ENCODE measurements at regions of chr16 and their contacts with region 1.

Region 1: DNA sequence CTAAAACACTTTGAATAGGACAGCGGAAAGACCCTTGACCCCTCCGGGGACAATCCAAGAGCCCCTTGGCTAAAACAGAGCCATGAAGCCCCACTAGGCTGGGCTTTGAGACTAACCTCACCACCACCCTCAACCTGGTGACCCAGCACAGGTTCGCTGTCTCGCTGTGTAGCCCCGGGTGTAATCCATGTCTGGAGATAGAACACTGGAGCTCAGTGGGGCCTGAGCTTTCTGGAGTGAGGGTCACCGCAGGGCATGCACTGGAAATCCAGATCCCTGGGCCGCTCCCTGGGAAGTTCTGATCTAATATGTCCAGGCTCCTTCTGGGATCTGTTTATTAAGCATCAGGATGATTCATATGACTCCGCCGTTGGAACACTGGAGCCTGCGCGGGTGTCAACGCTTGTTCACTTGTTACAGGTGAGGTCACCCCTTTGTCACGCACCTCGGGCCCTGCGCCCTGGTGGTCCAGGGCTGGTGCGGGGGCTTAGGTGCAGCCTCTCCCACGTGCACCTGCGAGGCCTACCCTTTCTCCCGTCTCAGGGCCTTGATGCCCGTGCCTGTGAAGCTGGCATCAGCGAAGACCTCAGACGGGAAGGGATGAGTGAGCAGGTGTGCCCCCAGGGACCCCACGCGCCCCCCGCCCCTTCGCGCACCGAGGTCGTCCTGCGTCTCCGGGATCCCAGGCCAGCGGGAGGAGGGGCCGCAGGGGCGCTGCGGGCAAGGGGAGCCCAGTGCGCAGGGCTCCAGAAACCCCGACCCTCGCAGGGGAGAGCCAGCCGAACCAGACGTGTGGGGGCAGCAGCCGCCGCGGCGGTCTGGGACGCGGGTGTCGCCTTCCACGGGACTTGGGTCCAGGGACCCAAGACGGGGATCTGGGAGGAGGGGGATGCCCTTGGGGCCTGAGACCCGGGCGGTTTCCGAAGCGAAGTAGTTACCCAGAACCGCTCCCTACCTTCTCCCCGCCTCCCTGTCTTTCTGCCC is 224.1 kb upstream of the FOXF1 start:
- DNase-seq: no peak
- H3K4me3 Mint-ChIP-seq: no peak overlapping the region
- H3K27ac Mint-ChIP-seq: no peak overlapping the region
- H3K4me1 Mint-ChIP-seq: no peaks in the 10 kb centered on the region
- H3K27me3 Mint-ChIP-seq: peaks cover 47% of the 10 kb centered on the region

Region 2: GRCh38 chr16:86107215-86107825 is 178.9 kb before region 1 on chr16:
- CTCF ChIA-PET with region 1: no interaction called
- POLR2A ChIA-PET with region 1: no interaction called
- intact Hi-C with region 1: no loop called
- DNase-seq: no peak
- H3K4me3 Mint-ChIP-seq: no peak overlapping the region
- H3K27ac Mint-ChIP-seq: no peak overlapping the region
- H3K4me1 Mint-ChIP-seq: no peaks in the 10 kb centered on the region
- H3K27me3 Mint-ChIP-seq: peaks cover 2% of the 10 kb centered on the region

Region 3: DNA sequence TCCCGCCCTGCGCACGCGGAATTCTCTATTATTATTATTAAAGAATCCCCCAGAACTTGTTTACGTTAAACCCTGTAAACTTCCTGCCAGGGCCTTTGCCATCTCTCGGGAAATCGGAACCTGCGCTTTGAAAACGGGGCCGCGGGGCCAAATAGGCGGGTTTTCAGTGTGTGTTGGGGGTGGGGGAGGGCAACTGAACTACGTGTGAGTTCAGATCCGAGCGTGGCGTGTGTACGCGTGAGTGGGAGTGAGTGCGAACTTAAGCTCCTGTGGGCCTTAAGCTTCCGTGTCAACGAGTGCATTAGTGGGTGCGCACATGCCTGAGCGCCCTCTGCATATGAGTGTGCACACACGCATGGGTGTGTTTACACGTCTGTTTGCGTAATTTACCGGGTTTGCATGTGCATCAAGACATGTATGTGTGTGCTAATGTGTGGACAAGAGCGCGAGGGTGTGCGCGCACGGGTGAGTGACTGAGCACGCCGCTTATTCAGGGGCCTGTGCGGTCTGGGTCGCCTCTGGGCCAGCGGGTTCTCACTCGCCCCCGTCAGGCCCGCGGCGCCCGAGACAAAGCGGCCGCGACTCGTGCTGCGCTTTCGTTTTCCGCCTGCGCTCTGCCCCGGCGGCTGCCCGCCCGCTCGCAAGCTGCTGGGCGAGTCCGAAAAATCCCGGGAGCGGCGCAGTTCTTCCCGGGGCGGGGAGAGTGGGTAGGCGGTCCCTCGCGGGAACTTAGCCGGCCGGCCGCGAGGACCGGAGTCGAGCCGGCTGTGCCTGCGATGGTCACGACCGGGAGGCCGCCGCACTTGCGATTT is 222.9 kb after region 1 on chr16:
- CTCF ChIA-PET with region 1: no interaction called
- POLR2A ChIA-PET with region 1: no interaction called
- intact Hi-C with region 1: loop called (anchors 10 kb)
- DNase-seq: no peak
- H3K4me3 Mint-ChIP-seq: peak overlapping the region; percentile 72
- H3K27ac Mint-ChIP-seq: peak overlapping the region; percentile 56
- H3K4me1 Mint-ChIP-seq: peaks cover 28% of the 10 kb centered on the region
- H3K27me3 Mint-ChIP-seq: peaks cover 64% of the 10 kb centered on the region